ENCODE measurements at regions of chr11 and their contacts with region 1.

Region 1: DNA sequence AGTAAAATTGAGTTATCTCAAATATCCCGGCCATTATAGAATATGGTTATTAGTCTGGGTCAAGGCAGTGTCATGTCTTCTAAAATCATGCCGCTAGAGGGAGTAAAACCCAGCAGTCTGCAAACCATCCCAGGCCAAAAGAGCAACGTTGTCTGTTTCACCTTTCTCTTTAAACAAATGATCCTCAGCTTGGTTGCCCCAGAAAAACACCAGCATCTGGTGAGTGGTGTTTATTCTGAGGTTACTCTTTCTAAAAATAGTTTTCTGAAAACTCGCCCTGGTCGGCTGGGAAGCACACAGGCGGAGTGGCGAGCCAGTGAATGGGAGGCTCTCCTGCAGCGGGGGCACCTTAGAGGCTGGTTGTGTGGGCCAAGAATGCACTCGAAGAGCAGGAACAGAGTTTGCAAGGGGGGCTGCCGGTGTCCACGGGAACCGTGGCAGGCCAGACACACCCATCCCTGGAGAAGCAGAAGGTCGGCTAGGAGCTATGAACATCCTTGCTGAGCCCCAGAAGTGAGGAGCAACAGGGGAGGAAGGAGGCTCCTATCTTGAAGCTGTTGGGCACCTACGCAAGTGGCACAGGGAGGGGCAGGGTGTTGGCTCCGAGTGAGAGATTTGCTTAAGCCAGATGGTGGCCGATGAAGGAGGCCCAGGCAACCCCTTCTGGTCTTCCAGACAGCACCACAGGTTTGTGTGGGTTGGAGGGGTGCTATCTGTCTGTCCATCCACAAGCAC is 297.1 kb downstream of the ETS1 start:
- DNase-seq: peak; percentile 76
- H3K4me3 Mint-ChIP-seq: peak overlapping the region; percentile 90
- H3K27ac Mint-ChIP-seq: peak overlapping the region; percentile 98
- H3K4me1 Mint-ChIP-seq: peaks cover 100% of the 10 kb centered on the region
- H3K27me3 Mint-ChIP-seq: peaks cover 1% of the 10 kb centered on the region

Region 2: DNA sequence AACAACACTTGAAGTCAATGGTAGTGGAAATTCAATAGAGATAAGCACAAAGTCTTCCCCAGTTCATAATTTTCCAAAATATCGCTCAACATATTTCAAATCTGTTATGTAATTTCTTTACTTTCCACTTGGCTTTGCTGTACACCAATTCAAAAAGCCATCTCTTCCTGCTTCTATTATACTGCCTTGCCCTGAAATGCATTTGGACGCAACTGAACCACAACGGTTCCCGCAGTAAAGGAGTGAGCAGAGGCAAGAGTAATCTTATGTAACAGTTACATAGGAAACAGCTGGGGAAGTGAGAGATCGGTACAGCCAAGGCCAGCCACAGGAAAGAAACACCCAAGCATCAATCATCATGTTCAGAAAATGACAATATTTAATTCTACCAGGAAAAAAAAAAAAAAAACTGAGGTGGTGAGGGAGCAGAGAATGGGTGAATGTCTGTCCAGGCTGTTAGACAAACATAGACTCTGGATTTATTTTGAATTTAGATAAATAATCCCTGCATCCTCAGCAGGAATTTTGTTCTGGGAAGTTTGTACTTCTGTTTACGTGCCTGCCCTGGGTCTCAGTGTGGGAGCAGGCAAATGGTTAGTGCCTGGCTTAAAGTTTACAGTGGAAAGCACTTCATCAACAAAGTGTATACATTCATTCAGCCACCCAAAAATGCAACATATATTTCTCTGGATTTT is 95.1 kb before region 1 on chr11:
- intact Hi-C with region 1: loop called (anchors 1 kb)
- DNase-seq: peak; percentile 42
- H3K4me3 Mint-ChIP-seq: no peak overlapping the region
- H3K27ac Mint-ChIP-seq: peak overlapping the region; percentile 60
- H3K4me1 Mint-ChIP-seq: peaks cover 47% of the 10 kb centered on the region
- H3K27me3 Mint-ChIP-seq: peaks cover 2% of the 10 kb centered on the region

Region 3: GRCh38 chr11:128323381-128323780 is 33.1 kb after region 1 on chr11:
- intact Hi-C with region 1: loop called (anchors 1 kb)
- DNase-seq: no peak
- H3K4me3 Mint-ChIP-seq: peak overlapping the region; percentile 70
- H3K27ac Mint-ChIP-seq: peak overlapping the region; percentile 95
- H3K4me1 Mint-ChIP-seq: peaks cover 91% of the 10 kb centered on the region
- H3K27me3 Mint-ChIP-seq: no peaks in the 10 kb centered on the region

Region 4: GRCh38 chr11:128472128-128473089 is 182.1 kb after region 1 on chr11:
- intact Hi-C with region 1: loop called (anchors 1 kb)
- DNase-seq: peak; percentile 61
- H3K4me3 Mint-ChIP-seq: peak overlapping the region; percentile 80
- H3K27ac Mint-ChIP-seq: peak overlapping the region; percentile 95
- H3K4me1 Mint-ChIP-seq: peaks cover 94% of the 10 kb centered on the region
- H3K27me3 Mint-ChIP-seq: no peaks in the 10 kb centered on the region

Region 5: DNA sequence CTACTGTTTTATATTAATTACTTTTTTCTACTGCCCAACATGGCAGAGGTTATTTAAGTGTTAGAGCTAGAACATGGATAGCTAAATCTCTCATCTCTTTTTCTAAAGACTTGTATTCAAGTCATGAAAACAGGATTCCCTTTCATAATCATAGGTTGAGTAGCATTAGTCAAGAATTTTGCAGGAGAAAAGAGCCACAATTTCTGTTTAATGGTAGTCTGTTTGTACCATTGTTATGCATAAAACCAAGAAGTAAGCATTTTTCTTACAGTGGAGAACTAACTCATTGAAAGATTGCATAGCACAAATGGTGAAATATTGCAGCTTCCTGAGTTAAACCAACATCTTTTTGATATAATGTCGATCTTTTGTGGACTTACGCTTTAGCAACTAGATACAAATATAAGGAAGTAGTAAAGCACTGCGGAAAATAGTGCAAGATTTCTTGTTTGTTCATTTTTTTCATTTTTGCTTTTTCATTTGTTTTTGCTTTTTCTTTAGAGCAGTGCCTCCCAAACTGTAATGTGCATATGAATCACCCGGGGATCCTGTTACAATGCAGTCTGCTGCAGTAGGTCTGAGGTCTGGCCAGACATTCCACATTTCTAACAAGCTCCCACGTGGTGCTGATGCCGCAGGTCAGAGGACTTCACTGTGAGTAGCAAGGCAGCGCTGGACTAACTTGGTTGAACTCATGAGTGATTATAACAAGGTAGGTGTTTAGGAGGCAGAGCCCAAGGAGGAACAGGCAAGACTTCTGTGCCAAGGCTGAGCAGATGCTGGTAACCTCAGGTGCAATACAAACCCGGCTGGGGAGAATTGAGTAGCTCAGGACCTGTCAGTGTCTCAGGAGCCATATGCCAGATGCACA is 292.5 kb after region 1 on chr11:
- intact Hi-C with region 1: loop called (anchors 1 kb)
- DNase-seq: no peak
- H3K4me3 Mint-ChIP-seq: no peak overlapping the region
- H3K27ac Mint-ChIP-seq: peak overlapping the region; percentile 80
- H3K4me1 Mint-ChIP-seq: peaks cover 51% of the 10 kb centered on the region
- H3K27me3 Mint-ChIP-seq: peaks cover 6% of the 10 kb centered on the region

Region 6: GRCh38 chr11:128831174-128832120 is 541.2 kb after region 1 on chr11:
- intact Hi-C with region 1: loop called (anchors 1 kb)
- DNase-seq: peak; percentile 75
- H3K4me3 Mint-ChIP-seq: peak overlapping the region; percentile 68
- H3K27ac Mint-ChIP-seq: peak overlapping the region; percentile 90
- H3K4me1 Mint-ChIP-seq: peaks cover 31% of the 10 kb centered on the region
- H3K27me3 Mint-ChIP-seq: peaks cover 9% of the 10 kb centered on the region